ENCODE measurements at regions of chr3 and their contacts with region 1.

Region 1: DNA sequence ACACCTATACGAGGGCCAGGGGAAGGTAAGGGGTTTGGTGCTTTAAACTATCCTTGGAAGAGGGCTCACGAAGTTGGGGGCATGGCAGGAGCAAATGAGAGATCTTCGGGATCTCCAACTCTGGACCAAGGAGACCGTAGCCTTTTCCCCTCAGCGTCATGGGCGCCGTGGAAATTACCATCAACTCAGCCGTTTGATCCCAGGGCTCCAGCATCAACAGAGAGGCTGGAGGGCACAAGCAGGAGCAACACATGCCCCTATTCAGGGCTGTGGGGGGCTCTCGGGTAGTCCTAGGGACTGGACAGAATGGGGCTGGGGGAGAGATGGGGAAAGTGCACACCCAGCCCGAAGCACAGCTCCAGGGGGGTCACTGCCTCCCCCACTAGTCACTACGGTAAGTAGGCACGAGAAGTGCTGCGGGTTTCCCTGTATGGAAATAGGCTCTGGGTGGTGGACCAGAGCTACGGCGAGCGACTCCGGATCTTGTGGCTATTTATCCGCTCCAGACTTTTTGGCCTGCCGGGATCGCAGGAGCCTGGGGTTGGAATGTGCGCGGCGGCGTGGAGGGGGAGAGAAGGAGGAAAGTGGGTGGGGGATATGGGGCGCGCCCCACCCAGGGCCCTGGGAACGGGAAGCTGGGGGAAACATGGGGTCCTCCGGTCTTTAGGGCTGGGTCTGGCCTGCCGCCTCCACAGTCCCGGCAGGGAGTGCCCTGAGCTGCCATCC is 539 bp upstream of the LAMB2 start:
- DNase-seq: peak; percentile 69
- H3K4me3 ChIP-seq: peak overlapping the region; percentile 89
- H3K27ac ChIP-seq: peak overlapping the region; percentile 49
- H3K27me3 ChIP-seq: no peaks in the 10 kb centered on the region
- CTCF ChIP-seq: no peak

Region 2: GRCh38 chr3:49120438-49121131 is 12.8 kb before region 1 on chr3 and contains the start of gene USP19:
- CTCF ChIA-PET with region 1: no interaction called
- POLR2A ChIA-PET with region 1: interaction called, 29 read pairs
- DNase-seq: peak; percentile 80
- H3K4me3 ChIP-seq: peak within 1 kb of the TSS; percentile 96
- H3K27ac ChIP-seq: peak within 1 kb of the TSS; percentile 91
- H3K27me3 ChIP-seq: no peaks in the 10 kb centered on the region
- CTCF ChIP-seq: no peak
- polyA plus RNA-seq, gene USP19: 33.3 and 37.7 TPM in 2 replicates

Region 3: GRCh38 chr3:49158108-49158709 is 24.8 kb after region 1 on chr3:
- CTCF ChIA-PET with region 1: no interaction called
- POLR2A ChIA-PET with region 1: interaction called, 12 read pairs
- DNase-seq: no peak
- H3K4me3 ChIP-seq: no peak overlapping the region
- H3K27ac ChIP-seq: no peak overlapping the region
- H3K27me3 ChIP-seq: no peaks in the 10 kb centered on the region
- CTCF ChIP-seq: peak; percentile 13; the same call in 1 of the 2 replicates

Region 4: GRCh38 chr3:49295489-49296058 is 162.2 kb after region 1 on chr3:
- CTCF ChIA-PET with region 1: no interaction called
- POLR2A ChIA-PET with region 1: no interaction called
- DNase-seq: peak; percentile 10
- H3K4me3 ChIP-seq: no peak overlapping the region
- H3K27ac ChIP-seq: no peak overlapping the region
- H3K27me3 ChIP-seq: no peaks in the 10 kb centered on the region
- CTCF ChIP-seq: peak; percentile 65

Region 5: GRCh38 chr3:49454458-49454857 is 321.1 kb after region 1 on chr3:
- CTCF ChIA-PET with region 1: interaction called, 12 read pairs
- POLR2A ChIA-PET with region 1: no interaction called
- DNase-seq: no peak
- H3K4me3 ChIP-seq: no peak overlapping the region
- H3K27ac ChIP-seq: no peak overlapping the region
- H3K27me3 ChIP-seq: no peaks in the 10 kb centered on the region
- CTCF ChIP-seq: no peak

Region 6: DNA sequence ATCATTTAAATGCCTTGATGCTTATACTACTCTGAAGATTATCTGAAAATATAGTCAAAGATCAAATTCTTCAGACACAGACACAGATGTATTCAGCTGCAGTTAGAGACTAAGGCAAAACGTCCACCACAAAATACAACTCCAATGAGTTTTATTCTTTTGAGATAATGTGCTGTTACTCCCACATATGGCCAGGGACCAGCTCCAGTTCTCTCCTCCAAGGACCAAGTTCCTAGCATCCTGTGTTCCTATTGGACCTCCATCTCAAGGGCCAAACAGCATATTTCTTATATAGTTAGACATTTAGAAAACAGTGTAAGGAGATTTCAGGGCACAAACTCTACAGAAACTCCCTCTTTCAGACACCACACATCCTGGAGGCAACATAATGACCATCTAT is 625.8 kb after region 1 on chr3:
- CTCF ChIA-PET with region 1: no interaction called
- POLR2A ChIA-PET with region 1: no interaction called
- DNase-seq: no peak
- H3K4me3 ChIP-seq: no peak overlapping the region
- H3K27ac ChIP-seq: no peak overlapping the region
- H3K27me3 ChIP-seq: no peaks in the 10 kb centered on the region
- CTCF ChIP-seq: no peak